ENCODE measurements at regions of chr2 and their contacts with region 1.

Region 1: DNA sequence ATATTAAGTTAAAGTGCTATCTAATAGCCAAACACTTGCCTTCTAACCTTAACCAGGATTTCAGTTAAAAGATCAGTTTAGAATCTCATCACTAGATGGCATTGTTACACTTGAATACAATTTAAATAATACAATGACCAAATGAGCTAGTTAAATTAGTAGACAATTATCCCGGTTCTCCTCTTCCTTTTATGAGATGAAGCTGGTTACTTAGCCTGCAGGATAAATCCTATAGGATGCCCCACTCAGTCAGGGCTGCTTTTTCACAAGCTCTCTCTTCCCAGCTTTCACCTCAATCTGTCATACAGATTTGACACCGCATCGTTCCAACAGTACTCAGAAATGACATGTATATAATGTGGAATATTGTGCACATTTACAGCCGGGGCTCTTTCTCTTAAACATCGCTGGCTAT is 678.8 kb downstream of the KCNJ3 start:
- DNase-seq: peak; percentile 7
- ATAC-seq: peak; percentile 43; the same call in 2 of the 3 replicates
- H3K4me3 ChIP-seq: no peak overlapping the region
- H3K27ac ChIP-seq: no peak overlapping the region
- H3K4me1 ChIP-seq: no peaks in the 10 kb centered on the region
- H3K27me3 ChIP-seq: no peaks in the 10 kb centered on the region
- CTCF ChIP-seq: peak; percentile 35
- EP300 ChIP-seq: no peak
- POLR2A ChIP-seq: no peak
- RAD21 ChIP-seq: no peak

Region 2: GRCh38 chr2:155412598-155412997 is 35.3 kb after region 1 on chr2:
- CTCF ChIA-PET with region 1: no interaction called
- POLR2A ChIA-PET with region 1: no interaction called
- in situ Hi-C with region 1: no loop called
- intact Hi-C with region 1: no loop called
- DNase-seq: no peak
- ATAC-seq: no peak
- H3K4me3 ChIP-seq: no peak overlapping the region
- H3K27ac ChIP-seq: no peak overlapping the region
- H3K4me1 ChIP-seq: no peaks in the 10 kb centered on the region
- H3K27me3 ChIP-seq: no peaks in the 10 kb centered on the region
- CTCF ChIP-seq: no peak
- EP300 ChIP-seq: no peak
- POLR2A ChIP-seq: no peak
- RAD21 ChIP-seq: no peak

Region 3: GRCh38 chr2:155815886-155816285 is 438.6 kb after region 1 on chr2:
- CTCF ChIA-PET with region 1: no interaction called
- POLR2A ChIA-PET with region 1: no interaction called
- in situ Hi-C with region 1: no loop called
- intact Hi-C with region 1: loop called (anchors 1 kb)
- DNase-seq: peak; percentile 54
- ATAC-seq: peak; percentile 96
- H3K4me3 ChIP-seq: no peak overlapping the region
- H3K27ac ChIP-seq: no peak overlapping the region
- H3K4me1 ChIP-seq: no peaks in the 10 kb centered on the region
- H3K27me3 ChIP-seq: no peaks in the 10 kb centered on the region
- CTCF ChIP-seq: peak; percentile 59
- EP300 ChIP-seq: no peak
- POLR2A ChIP-seq: no peak
- RAD21 ChIP-seq: peak; percentile 39

Region 4: GRCh38 chr2:157194097-157194688 is 1816.9 kb after region 1 on chr2:
- CTCF ChIA-PET with region 1: interaction called, 3 read pairs
- POLR2A ChIA-PET with region 1: no interaction called
- in situ Hi-C with region 1: loop called (anchors 10 kb)
- intact Hi-C with region 1: loop called (anchors 2 kb)
- DNase-seq: peak; percentile 46
- ATAC-seq: peak; percentile 70
- H3K4me3 ChIP-seq: no peak overlapping the region
- H3K27ac ChIP-seq: no peak overlapping the region
- H3K4me1 ChIP-seq: no peaks in the 10 kb centered on the region
- H3K27me3 ChIP-seq: no peaks in the 10 kb centered on the region; a peak in 1 of 5 replicates
- CTCF ChIP-seq: peak; percentile 71
- EP300 ChIP-seq: no peak
- POLR2A ChIP-seq: no peak
- RAD21 ChIP-seq: 0 out of 2 replicates have a peak, but pooled peaks have one; percentile 34

Region 5: GRCh38 chr2:157336137-157337010 is 1959.1 kb after region 1 on chr2:
- CTCF ChIA-PET with region 1: no interaction called
- POLR2A ChIA-PET with region 1: no interaction called
- in situ Hi-C with region 1: no loop called
- intact Hi-C with region 1: loop called (anchors 10 kb)
- DNase-seq: peak; percentile 44
- ATAC-seq: peak; percentile 93
- H3K4me3 ChIP-seq: no peak overlapping the region
- H3K27ac ChIP-seq: no peak overlapping the region
- H3K4me1 ChIP-seq: no peaks in the 10 kb centered on the region
- H3K27me3 ChIP-seq: no peaks in the 10 kb centered on the region
- CTCF ChIP-seq: peak; percentile 69
- EP300 ChIP-seq: no peak
- POLR2A ChIP-seq: no peak
- RAD21 ChIP-seq: no peak

Measured in HepG2 (cell line).